Head of caudate nucleus (tissue), 42 donors: ENCODE measurements at regions of chr21 and their contacts with region 1.

Region 1: GRCh38 chr21:33608559-33608958 is 20.1 kb upstream of the DONSON start:
- DNase-seq: no peak

Region 2: GRCh38 chr21:33552093-33552998 is 56.2 kb before region 1 on chr21:
- intact Hi-C with region 1: loop called (anchors 10 kb)
- DNase-seq: no peak